Kidney (tissue), 22 donors: ENCODE measurements at regions of chr1 and their contacts with region 1.

Region 1: DNA sequence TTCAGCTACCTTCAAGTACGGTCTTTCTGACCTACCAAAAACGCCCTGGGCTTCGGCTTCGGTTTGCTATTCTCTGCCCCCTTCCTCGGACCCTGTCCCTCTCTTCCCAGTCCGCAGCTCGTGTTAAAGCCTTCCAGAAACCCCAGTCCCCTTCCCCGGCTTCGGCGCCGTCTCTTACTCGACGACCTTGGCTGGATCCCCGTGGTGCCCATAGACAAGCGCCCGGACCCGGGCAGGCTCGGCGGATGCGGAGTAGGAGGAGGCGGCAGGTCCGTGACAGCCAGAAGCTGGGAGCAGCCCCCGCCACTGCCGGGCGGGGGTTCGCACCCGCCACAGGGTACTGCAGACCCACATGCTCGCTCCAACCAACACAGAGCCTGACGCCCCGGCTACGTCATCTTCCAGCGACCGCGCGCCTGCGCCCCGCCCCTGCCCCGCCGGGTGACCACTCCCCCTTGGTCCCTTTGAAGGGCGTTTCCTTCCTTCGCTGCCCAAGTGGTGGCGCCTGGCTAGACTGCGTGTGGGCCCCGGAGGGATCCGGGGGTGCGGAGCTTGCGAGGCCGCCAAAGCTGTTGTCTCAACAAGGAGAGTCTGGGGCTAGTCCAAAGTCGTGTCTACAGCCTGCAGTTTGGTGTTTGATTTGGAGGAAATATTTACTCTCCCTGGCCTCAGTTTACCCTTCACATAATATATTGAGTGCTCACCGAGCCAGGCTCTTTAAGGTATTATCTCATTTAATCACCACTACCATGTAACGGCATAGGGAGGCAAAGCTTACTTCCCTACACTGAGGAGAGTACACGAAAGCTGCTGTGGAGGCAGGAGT is at the start of gene MECR:
- DNase-seq: peak; percentile 96 to 98 (median 97)
- H3K4me3 ChIP-seq: peak within 1 kb of the TSS; percentile 78 to 97 (median 92)
- H3K27ac ChIP-seq: no peak within 1 kb of the TSS
- H3K4me1 ChIP-seq: peaks cover 0 to 7% (median 7%) of the 10 kb centered on the region in 3 donors
- H3K27me3 ChIP-seq: no peaks in the 10 kb centered on the region
- CTCF ChIP-seq: no peak
- total RNA-seq, gene MECR: 27.7 TPM

Region 2: DNA sequence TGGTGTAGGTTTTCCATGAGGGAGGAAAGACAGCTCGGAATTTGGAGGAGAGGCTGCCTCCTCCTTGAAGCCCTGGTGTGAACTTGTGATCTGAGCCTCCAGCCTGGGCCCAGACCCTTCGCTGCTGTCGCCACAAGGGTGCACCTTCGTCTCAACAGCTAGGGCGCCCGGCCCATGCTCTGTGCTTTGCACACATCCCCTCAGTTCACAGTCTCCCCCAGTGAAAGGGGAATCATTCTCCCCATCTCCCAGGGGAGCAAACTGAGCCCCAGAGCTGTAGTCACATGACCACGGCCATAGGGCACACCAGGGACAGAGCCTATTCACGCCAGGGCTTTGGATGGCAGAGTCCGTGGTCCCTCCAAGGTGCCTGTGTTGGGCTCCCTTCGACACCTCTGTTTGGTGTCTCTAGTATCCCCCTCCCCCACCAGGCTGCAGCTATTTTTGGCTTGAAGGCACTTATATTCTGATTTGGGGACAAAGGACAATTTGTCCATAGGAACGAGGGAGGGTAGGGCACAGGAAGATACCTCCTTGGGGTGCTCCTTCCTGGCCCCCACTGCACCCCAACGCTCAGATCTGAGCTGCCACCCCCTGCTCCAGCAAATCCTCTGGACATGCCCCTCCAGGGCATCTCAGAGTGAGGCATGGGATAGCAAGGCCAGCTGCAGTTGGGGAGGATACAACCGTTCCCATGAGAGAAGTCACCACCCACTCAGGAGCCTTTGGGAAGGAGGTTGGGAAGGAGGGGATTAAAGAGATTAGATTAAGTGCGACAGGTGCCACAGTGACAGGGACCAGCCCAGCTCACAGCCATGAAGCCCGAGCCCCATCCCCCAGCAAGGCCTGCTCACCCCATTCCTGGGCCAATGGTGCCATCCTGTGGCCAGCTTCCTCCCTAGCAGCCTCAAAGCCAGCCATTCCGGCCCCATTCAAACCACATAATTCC is 1476.9 kb after region 1 on chr1:
- intact Hi-C with region 1: loop called (anchors 10 kb)
- DNase-seq: peak; percentile 84 to 92 (median 85)
- H3K4me3 ChIP-seq: no peak overlapping the region
- H3K27ac ChIP-seq: no peak overlapping the region
- H3K4me1 ChIP-seq: no peaks in the 10 kb centered on the region
- H3K27me3 ChIP-seq: no peaks in the 10 kb centered on the region
- CTCF ChIP-seq: peak; percentile 87